ENCODE measurements at regions of chr14 and their contacts with region 1.

Region 1: GRCh38 chr14:72366619-72367018 is 434.4 kb downstream of the RGS6 start:
- DNase-seq: no peak
- H3K4me3 ChIP-seq: no peak overlapping the region
- H3K27ac ChIP-seq: no peak overlapping the region
- H3K4me1 ChIP-seq: no peaks in the 10 kb centered on the region
- H3K27me3 ChIP-seq: no peaks in the 10 kb centered on the region
- CTCF ChIP-seq: no peak

Region 2: GRCh38 chr14:72318648-72319047 is 48.0 kb before region 1 on chr14:
- CTCF ChIA-PET with region 1: no interaction called
- dilution Hi-C with region 1: loop called (anchors 5 kb)
- in situ Hi-C with region 1: no loop called
- intact Hi-C with region 1: no loop called
- DNase-seq: no peak
- H3K4me3 ChIP-seq: no peak overlapping the region
- H3K27ac ChIP-seq: no peak overlapping the region
- H3K4me1 ChIP-seq: no peaks in the 10 kb centered on the region
- H3K27me3 ChIP-seq: no peaks in the 10 kb centered on the region
- CTCF ChIP-seq: no peak